Posterior vena cava (tissue), 2 donors: ENCODE measurements at regions of chrX and their contacts with region 1.

Region 1: DNA sequence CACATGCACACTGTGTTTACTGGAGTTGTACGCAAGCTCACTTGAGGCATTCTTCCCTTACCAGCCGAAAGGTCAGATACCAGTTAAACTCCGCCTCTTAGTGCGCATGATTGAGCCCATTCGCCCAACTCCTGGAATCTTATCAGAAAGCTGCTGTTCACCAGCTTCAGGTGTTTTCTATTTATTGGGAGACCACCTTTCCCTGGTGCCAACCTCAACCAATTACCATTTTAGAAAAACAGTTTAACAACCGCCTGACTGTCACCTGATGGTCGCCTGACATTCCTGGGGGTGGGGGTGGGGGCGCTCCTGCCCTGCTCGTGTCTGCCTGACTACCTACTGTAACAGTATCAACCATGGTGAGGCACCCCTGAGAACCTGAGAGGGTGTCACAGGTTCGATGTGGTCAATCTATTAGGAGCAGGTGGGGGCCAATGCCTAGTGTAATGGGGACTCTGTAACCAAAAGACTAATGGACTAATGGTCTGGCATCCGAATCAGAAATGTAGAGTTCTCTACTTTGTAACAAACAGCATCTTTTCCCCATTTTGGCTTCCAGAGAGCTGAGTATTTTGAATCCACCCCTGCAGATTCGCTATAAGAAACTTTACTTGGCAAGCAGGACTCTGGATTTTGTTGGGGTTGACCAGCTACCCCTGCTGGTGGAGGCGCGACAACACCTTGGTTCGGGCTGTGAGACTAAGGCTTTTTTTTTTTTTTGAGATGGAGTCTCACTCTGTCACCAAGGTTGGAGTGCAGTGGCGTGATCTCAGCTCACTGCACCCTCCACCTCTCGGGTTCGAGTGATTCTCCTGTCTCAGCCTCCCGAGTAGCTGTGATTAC is 58.2 kb upstream of the ZNF157 start:
- DNase-seq: no peak

Region 2: DNA sequence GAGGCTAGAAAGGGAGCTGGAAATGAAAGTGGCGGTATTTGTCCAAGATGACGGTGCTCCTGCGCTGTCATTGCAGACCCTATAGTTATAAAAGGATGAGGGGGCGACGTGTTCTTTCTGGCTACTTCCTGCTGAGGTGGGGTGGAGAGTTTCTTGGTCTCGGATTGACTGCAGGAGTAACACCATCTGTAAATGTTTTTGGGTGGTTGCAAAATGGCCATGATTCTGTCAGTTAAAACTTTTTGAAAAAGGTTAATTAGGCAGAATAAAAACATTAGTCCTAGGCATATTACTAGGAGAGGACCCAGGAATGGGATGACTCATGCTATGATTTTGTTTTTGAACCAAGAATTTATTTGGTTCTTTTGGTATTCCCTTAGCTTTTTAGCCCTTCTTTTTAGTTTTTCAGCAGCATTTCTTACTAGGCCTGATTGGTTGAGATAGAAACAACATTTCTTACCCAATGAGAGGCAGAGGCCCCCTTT is 26.3 kb before region 1 on chrX:
- intact Hi-C with region 1: no loop called
- DNase-seq: no peak

Region 3: GRCh38 chrX:47898024-47898423 is 585.9 kb after region 1 on chrX:
- intact Hi-C with region 1: loop called in 1 of 2 experiments (anchors 10 kb)
- DNase-seq: no peak

Region 4: GRCh38 chrX:48196745-48197201 is 884.6 kb after region 1 on chrX and contains the start of gene SSX5:
- intact Hi-C with region 1: no loop called
- DNase-seq: no peak
- total RNA-seq, gene SSX5: not detected